Activated B cell treated with CpG ODN at 0.5 μM for 24 hours (primary cell): ENCODE measurements at regions of chr12 and their contacts with region 1.

Region 1: GRCh38 chr12:31362759-31363415 is 36.9 kb upstream of the SINHCAF start:
- DNase-seq: no peak
- ATAC-seq: peak; percentile 81
- H3K4me3 Mint-ChIP-seq: peak overlapping the region; percentile 58
- H3K27ac Mint-ChIP-seq: peak overlapping the region; percentile 47
- H3K4me1 Mint-ChIP-seq: peaks cover 19% of the 10 kb centered on the region
- H3K27me3 Mint-ChIP-seq: no peaks in the 10 kb centered on the region
- CTCF ChIP-seq: no peak

Region 2: DNA sequence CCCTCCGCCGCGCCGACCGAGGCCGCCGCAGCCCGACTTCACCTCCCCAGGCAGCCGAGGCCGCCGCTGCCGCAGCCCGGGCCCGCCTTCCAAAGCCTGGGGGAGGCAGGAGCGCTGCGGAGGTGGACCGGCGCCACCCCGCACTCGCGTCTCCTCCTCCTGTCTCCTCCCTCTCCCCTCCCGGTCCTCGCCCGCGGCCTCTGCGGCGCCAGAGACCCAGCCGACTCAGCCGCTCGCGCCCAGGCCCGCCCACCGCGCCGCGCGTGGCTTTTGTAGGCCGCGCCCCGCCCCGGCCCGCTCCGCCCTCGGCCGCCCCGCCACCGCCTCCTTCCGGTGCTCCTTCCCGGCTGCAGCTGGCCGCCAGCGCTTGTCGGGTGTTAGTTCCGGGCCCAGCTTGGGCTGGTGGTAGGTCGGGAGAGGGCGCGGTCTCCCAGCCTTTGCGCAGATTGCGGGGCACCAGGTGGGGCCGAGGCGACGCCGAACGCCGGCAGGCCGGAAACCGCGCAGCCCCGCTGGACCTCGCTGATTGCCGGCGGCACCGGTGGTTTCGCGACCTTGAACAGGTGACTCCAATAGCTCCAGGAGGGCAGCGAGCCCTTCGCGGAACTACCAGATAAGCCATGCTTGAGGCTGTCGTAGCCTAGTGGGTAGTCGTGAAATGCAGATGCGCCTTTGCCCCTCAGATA is 608.0 kb before region 1 on chr12 and contains the start of gene CAPRIN2:
- CTCF ChIA-PET with region 1: no interaction called
- POLR2A ChIA-PET with region 1: no interaction called
- intact Hi-C with region 1: no loop called
- DNase-seq: peak; percentile 97
- ATAC-seq: peak; percentile 88
- H3K4me3 Mint-ChIP-seq: peak within 1 kb of the TSS; percentile 95
- H3K27ac Mint-ChIP-seq: peak within 1 kb of the TSS; percentile 90
- H3K4me1 Mint-ChIP-seq: peaks cover 20% of the 10 kb centered on the region
- H3K27me3 Mint-ChIP-seq: no peaks in the 10 kb centered on the region
- CTCF ChIP-seq: no peak
- total RNA-seq, gene CAPRIN2: 17.5 and 18.7 TPM in 2 replicates

Region 3: GRCh38 chr12:31117203-31118011 is 245.5 kb before region 1 on chr12:
- CTCF ChIA-PET with region 1: no interaction called
- POLR2A ChIA-PET with region 1: no interaction called
- intact Hi-C with region 1: loop called (anchors 10 kb)
- DNase-seq: peak; percentile 55
- ATAC-seq: peak; percentile 73
- H3K4me3 Mint-ChIP-seq: peak overlapping the region; percentile 79
- H3K27ac Mint-ChIP-seq: no peak overlapping the region
- H3K4me1 Mint-ChIP-seq: peaks cover 9% of the 10 kb centered on the region
- H3K27me3 Mint-ChIP-seq: no peaks in the 10 kb centered on the region
- CTCF ChIP-seq: no peak

Region 4: DNA sequence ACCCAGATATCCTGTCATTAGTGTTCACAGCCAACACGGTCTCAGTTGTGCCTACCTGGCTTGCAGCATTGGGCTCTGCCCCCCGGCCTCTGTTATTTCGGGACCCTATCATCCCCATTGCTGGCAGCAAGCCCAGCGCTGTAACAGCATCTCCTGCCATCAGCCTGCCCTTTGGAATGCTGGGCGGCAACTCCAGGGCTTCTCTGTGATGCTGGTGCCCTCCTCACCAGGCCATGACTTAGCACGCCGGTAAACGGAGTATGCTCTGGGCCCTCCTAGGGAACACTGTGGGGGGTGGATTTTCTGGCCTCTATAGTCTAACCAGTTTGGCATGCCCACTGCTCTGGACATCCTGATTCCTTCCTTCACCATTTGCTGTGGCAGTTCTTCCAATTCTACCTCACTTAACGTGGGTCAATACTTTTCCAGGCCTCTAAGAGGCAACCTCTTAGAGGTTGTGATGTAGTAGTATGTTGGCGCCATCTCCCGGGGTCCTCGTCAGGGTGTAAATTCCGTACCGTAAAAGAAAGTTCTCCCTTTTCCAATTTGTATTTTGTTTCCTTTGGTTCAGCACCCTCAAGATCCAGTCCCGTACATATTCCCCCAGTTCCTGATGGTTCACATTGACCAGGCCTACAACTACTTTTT is 116.9 kb before region 1 on chr12:
- CTCF ChIA-PET with region 1: interaction called, 14 read pairs
- POLR2A ChIA-PET with region 1: no interaction called
- intact Hi-C with region 1: loop called (anchors 1 kb)
- DNase-seq: no peak
- ATAC-seq: no peak
- H3K4me3 Mint-ChIP-seq: no peak overlapping the region
- H3K27ac Mint-ChIP-seq: no peak overlapping the region
- H3K4me1 Mint-ChIP-seq: no peaks in the 10 kb centered on the region
- H3K27me3 Mint-ChIP-seq: peaks cover 3% of the 10 kb centered on the region
- CTCF ChIP-seq: no peak

Region 5: GRCh38 chr12:31297572-31298512 is 65.0 kb before region 1 on chr12:
- CTCF ChIA-PET with region 1: no interaction called
- POLR2A ChIA-PET with region 1: interaction called, 11 read pairs
- intact Hi-C with region 1: loop called (anchors 2 kb)
- DNase-seq: no peak
- ATAC-seq: peak; percentile 22
- H3K4me3 Mint-ChIP-seq: peak overlapping the region; percentile 78
- H3K27ac Mint-ChIP-seq: peak overlapping the region; percentile 95
- H3K4me1 Mint-ChIP-seq: peaks cover 64% of the 10 kb centered on the region
- H3K27me3 Mint-ChIP-seq: no peaks in the 10 kb centered on the region
- CTCF ChIP-seq: no peak